Activated CD4-positive, alpha-beta T cell treated with anti-CD3 and anti-CD28 coated beads for 36 hours (primary cell): ENCODE measurements at regions of chr7 and their contacts with region 1.

Region 1: DNA sequence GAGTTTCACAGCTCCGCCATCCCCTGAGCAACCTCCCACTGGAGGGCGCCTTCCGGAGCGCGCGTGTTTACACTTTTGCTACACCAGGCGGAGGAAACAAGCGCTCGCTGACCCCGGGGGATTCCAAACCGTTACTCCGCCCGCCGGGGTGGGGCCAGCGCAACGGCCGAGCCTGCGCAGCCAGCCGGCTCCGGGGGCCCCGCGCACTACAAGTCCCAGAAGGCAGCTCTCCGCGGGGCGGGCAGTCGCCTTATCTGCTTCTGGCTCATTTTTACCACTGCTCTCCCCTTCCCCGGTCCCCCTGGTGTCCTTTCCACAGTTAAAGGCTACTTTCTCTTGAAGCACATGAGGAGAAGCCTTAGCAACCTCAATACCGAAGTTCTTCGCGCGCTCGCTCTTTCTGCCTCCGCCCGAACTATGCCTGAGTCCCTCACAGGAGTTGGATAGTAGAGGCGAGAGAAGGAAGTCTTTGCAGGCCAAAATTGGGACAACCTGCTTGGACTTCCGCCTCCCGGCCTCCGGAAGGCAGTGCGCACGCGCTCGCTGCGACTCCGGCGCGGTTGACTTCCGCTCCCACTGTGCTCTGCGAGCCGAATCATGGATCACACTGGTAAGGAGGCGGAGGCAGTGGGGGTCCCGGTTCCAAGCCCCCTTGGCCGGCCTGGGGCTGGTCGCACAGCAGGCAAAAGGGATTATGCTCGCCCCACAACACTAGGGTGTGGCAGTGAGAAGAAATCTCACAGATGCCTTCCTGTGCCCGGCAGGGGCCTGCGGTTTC is at the start of gene CBLL1:
- DNase-seq: peak; percentile 99
- ATAC-seq: peak; percentile 94
- H3K4me3 Mint-ChIP-seq: peak within 1 kb of the TSS; percentile 88
- H3K27ac Mint-ChIP-seq: peak within 1 kb of the TSS; percentile 100
- H3K4me1 Mint-ChIP-seq: peaks cover 44% of the 10 kb centered on the region
- H3K27me3 Mint-ChIP-seq: no peaks in the 10 kb centered on the region
- total RNA-seq, gene CBLL1: 36.9 to 57.9 TPM

Region 2: GRCh38 chr7:105975770-105976422 is 1767.9 kb before region 1 on chr7:
- CTCF ChIA-PET with region 1: no interaction called
- POLR2A ChIA-PET with region 1: no interaction called
- intact Hi-C with region 1: no loop called
- DNase-seq: no peak
- ATAC-seq: no peak
- H3K4me3 Mint-ChIP-seq: no peak overlapping the region
- H3K27ac Mint-ChIP-seq: no peak overlapping the region
- H3K4me1 Mint-ChIP-seq: no peaks in the 10 kb centered on the region
- H3K27me3 Mint-ChIP-seq: no peaks in the 10 kb centered on the region

Region 3: GRCh38 chr7:106112117-106112971 is 1631.4 kb before region 1 on chr7 and contains the start of gene SYPL1:
- CTCF ChIA-PET with region 1: no interaction called
- POLR2A ChIA-PET with region 1: no interaction called
- intact Hi-C with region 1: loop called in 1 of 2 experiments (anchors 10 kb)
- DNase-seq: peak; percentile 95
- ATAC-seq: peak; percentile 86
- H3K4me3 Mint-ChIP-seq: peak within 1 kb of the TSS; percentile 79
- H3K27ac Mint-ChIP-seq: peak within 1 kb of the TSS; percentile 89
- H3K4me1 Mint-ChIP-seq: peaks cover 64% of the 10 kb centered on the region
- H3K27me3 Mint-ChIP-seq: no peaks in the 10 kb centered on the region
- total RNA-seq, gene SYPL1: 23.7 to 28.8 TPM

Region 4: DNA sequence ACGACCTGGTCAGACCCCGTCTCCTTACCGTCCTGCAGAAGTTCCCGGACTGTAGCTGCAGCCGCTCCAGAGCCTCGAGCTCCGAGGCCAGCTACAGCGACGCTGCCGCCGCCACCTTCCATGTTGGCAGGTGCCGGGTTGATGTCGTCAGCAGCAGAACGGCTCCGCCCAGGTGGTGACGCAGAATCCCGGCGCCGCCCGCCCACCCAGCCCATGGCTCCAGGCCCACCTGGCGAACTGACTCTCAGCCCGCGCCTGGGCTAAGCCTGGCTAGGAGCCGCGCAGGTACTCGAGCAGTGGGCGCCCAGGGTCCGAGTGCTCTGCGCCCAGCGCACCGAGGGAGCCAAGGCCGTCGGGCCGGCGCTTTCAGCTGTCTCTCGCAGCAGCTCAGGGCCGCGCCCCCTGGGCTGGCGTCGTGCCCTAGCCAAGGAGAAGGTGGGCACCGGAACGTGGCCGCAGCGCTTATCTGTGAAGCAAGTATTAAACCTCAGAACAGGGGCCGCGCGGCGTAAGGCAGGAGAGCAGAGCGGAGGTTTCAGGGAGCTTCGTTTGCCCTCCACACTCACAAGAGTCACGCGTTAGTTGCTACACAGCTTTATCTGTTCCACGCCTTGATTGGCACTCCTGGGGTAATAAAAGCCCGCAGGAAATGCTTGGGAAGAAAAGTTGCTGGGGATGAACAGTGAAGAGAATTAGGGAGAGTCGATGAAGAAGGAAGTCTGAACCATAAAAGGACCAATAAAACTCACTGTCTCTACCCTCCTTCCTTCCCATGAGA is 179.8 kb before region 1 on chr7 and contains the starts of genes COG5 and DUS4L:
- CTCF ChIA-PET with region 1: interaction called, 4 read pairs
- POLR2A ChIA-PET with region 1: interaction called, 3 read pairs
- intact Hi-C with region 1: loop called (anchors 1 to 5 kb)
- DNase-seq: peak; percentile 92
- ATAC-seq: peak; percentile 88
- H3K4me3 Mint-ChIP-seq: peak within 1 kb of the TSS; percentile 85
- H3K27ac Mint-ChIP-seq: peak within 1 kb of the TSS; percentile 94
- H3K4me1 Mint-ChIP-seq: peaks cover 62% of the 10 kb centered on the region
- H3K27me3 Mint-ChIP-seq: no peaks in the 10 kb centered on the region
- total RNA-seq, gene COG5: 34.1 to 35.5 TPM
- total RNA-seq, gene DUS4L: 12.8 to 13.3 TPM

Region 5: GRCh38 chr7:107661081-107661864 is 82.5 kb before region 1 on chr7:
- CTCF ChIA-PET with region 1: interaction called, 7 read pairs
- POLR2A ChIA-PET with region 1: interaction called, 5 read pairs
- intact Hi-C with region 1: loop called in 1 of 2 experiments (anchors 1 kb)
- DNase-seq: peak; percentile 77
- ATAC-seq: peak; percentile 43
- H3K4me3 Mint-ChIP-seq: peak overlapping the region; percentile 78
- H3K27ac Mint-ChIP-seq: peak overlapping the region; percentile 82
- H3K4me1 Mint-ChIP-seq: peaks cover 31% of the 10 kb centered on the region
- H3K27me3 Mint-ChIP-seq: peaks cover 21% of the 10 kb centered on the region

Region 6: GRCh38 chr7:107694386-107694785 is 49.4 kb before region 1 on chr7:
- CTCF ChIA-PET with region 1: no interaction called
- POLR2A ChIA-PET with region 1: no interaction called
- intact Hi-C with region 1: no loop called
- DNase-seq: no peak
- ATAC-seq: no peak
- H3K4me3 Mint-ChIP-seq: no peak overlapping the region
- H3K27ac Mint-ChIP-seq: no peak overlapping the region
- H3K4me1 Mint-ChIP-seq: peaks cover 6% of the 10 kb centered on the region
- H3K27me3 Mint-ChIP-seq: peaks cover 13% of the 10 kb centered on the region

Region 7: DNA sequence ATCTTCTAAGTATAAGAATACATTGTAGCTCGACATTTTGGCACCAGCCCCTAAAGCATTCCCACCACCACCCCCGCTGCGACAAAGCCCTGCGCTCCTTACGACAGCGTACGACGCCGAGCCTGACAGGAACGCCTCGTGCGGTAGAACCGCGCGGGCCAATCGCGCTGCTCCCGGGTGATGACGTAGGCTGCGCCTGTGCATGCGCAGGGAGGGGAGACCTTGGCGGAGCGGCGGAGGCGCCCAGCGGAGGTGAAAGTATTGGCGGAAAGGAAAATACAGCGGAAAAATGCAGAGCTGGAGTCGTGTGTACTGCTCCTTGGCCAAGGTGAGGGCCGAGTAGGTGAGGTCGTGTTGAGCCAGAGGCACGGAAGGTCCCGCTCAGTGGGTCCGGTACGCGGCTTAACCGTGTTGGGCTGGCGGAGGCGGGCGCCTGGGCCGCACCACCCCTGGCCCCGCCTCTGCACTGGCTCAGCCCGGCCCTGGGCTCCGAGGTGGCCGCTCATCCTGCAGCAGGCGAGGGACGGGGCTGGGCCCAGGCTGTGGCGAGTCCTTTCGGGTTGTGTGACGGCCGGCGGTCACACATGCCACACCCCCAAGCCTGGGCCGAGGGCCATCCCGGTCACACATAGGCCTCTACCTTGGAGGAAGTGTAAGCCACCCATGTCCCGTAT is 147.3 kb after region 1 on chr7 and contains the start of gene DLD:
- CTCF ChIA-PET with region 1: interaction called, 19 read pairs
- POLR2A ChIA-PET with region 1: interaction called, 3 read pairs
- intact Hi-C with region 1: loop called (anchors 1 kb)
- DNase-seq: peak; percentile 97
- ATAC-seq: peak; percentile 98
- H3K4me3 Mint-ChIP-seq: peak within 1 kb of the TSS; percentile 79
- H3K27ac Mint-ChIP-seq: peak within 1 kb of the TSS; percentile 92
- H3K4me1 Mint-ChIP-seq: peaks cover 40% of the 10 kb centered on the region
- H3K27me3 Mint-ChIP-seq: no peaks in the 10 kb centered on the region
- total RNA-seq, gene DLD: 71.4 to 101 TPM

Region 8: GRCh38 chr7:108525985-108526767 is 782.4 kb after region 1 on chr7 and contains the start of gene PNPLA8:
- CTCF ChIA-PET with region 1: no interaction called
- POLR2A ChIA-PET with region 1: no interaction called
- intact Hi-C with region 1: loop called in 1 of 2 experiments (anchors 1 kb)
- DNase-seq: peak; percentile 100
- ATAC-seq: peak; percentile 92
- H3K4me3 Mint-ChIP-seq: peak within 1 kb of the TSS; percentile 91
- H3K27ac Mint-ChIP-seq: peak within 1 kb of the TSS; percentile 96
- H3K4me1 Mint-ChIP-seq: peaks cover 37% of the 10 kb centered on the region
- H3K27me3 Mint-ChIP-seq: peaks cover 2% of the 10 kb centered on the region
- total RNA-seq, gene PNPLA8: 14.2 to 18.4 TPM